Activated CD8-positive, alpha-beta memory T cell treated with anti-CD3 and anti-CD28 coated beads, Interleukin-2, amount 10 ng/mL, durations not matched to agents 7 days and 5 days (primary cell): ENCODE measurements at regions of chr12 and their contacts with region 1.

Region 1: GRCh38 chr12:49580572-49581535 is 12.9 kb upstream of the MCRS1 start:
- DNase-seq: peak; percentile 79
- ATAC-seq: peak; percentile 87
- H3K4me3 Mint-ChIP-seq: no peak overlapping the region
- H3K27ac Mint-ChIP-seq: no peak overlapping the region
- H3K4me1 Mint-ChIP-seq: peaks cover 20% of the 10 kb centered on the region
- H3K27me3 Mint-ChIP-seq: no peaks in the 10 kb centered on the region

Region 2: GRCh38 chr12:49487605-49488004 is 93.2 kb before region 1 on chr12:
- CTCF ChIA-PET with region 1: no interaction called
- DNase-seq: no peak
- ATAC-seq: no peak
- H3K4me3 Mint-ChIP-seq: no peak overlapping the region
- H3K27ac Mint-ChIP-seq: no peak overlapping the region
- H3K4me1 Mint-ChIP-seq: peaks cover 10% of the 10 kb centered on the region
- H3K27me3 Mint-ChIP-seq: no peaks in the 10 kb centered on the region

Region 3: DNA sequence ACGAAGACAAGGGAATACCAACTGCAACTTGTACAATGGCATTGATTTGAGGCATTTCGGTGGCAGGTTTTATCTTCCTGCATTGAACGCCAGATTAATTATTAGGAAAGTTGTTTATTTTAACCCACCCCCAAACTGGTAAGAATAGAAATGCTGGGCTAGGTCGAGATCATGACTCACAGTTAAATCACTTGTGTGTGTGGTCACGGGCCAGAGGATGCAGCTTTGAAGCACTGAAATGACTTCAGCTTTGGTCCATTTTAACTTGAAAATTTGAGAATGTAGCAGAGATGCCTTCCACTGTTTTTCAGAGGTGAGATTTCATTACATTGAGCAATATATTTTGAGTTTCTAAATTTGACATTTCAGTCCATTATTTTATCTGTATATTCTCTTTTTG is 65.6 kb before region 1 on chr12:
- CTCF ChIA-PET with region 1: interaction called, 19 read pairs
- DNase-seq: no peak
- ATAC-seq: no peak
- H3K4me3 Mint-ChIP-seq: no peak overlapping the region
- H3K27ac Mint-ChIP-seq: no peak overlapping the region
- H3K4me1 Mint-ChIP-seq: peaks cover 3% of the 10 kb centered on the region
- H3K27me3 Mint-ChIP-seq: no peaks in the 10 kb centered on the region

Region 4: GRCh38 chr12:49546481-49546880 is 34.4 kb before region 1 on chr12:
- CTCF ChIA-PET with region 1: interaction called, 96 read pairs
- DNase-seq: no peak
- ATAC-seq: no peak
- H3K4me3 Mint-ChIP-seq: no peak overlapping the region
- H3K27ac Mint-ChIP-seq: no peak overlapping the region
- H3K4me1 Mint-ChIP-seq: peaks cover 9% of the 10 kb centered on the region
- H3K27me3 Mint-ChIP-seq: peaks cover 42% of the 10 kb centered on the region

Region 5: GRCh38 chr12:49559011-49559675 is 21.7 kb before region 1 on chr12:
- CTCF ChIA-PET with region 1: interaction called, 96 read pairs
- DNase-seq: no peak
- ATAC-seq: no peak
- H3K4me3 Mint-ChIP-seq: no peak overlapping the region
- H3K27ac Mint-ChIP-seq: no peak overlapping the region
- H3K4me1 Mint-ChIP-seq: peaks cover 29% of the 10 kb centered on the region
- H3K27me3 Mint-ChIP-seq: no peaks in the 10 kb centered on the region

Region 6: GRCh38 chr12:49623142-49623904 is 42.5 kb after region 1 on chr12 and contains the start of gene PRPF40B:
- CTCF ChIA-PET with region 1: interaction called, 14 read pairs
- DNase-seq: peak; percentile 88
- ATAC-seq: peak; percentile 89
- H3K4me3 Mint-ChIP-seq: peak within 1 kb of the TSS; percentile 76
- H3K27ac Mint-ChIP-seq: peak within 1 kb of the TSS; percentile 85
- H3K4me1 Mint-ChIP-seq: peaks cover 22% of the 10 kb centered on the region
- H3K27me3 Mint-ChIP-seq: peaks cover 37% of the 10 kb centered on the region
- total RNA-seq, gene PRPF40B: 7.8 to 15.2 TPM